Activated naive CD4-positive, alpha-beta T cell treated with anti-CD3 and anti-CD28 coated beads for 36 hours (primary cell): ENCODE measurements at regions of chr10 and their contacts with region 1.

Region 1: GRCh38 chr10:839550-840205 is 91.8 kb downstream of the LARP4B start:
- DNase-seq: no peak
- H3K4me3 Mint-ChIP-seq: no peak overlapping the region
- H3K27ac Mint-ChIP-seq: no peak overlapping the region
- H3K4me1 Mint-ChIP-seq: peaks cover 6% of the 10 kb centered on the region
- H3K27me3 Mint-ChIP-seq: no peaks in the 10 kb centered on the region

Region 2: GRCh38 chr10:1003884-1004675 is 164.4 kb after region 1 on chr10:
- CTCF ChIA-PET with region 1: no interaction called
- intact Hi-C with region 1: loop called (anchors 10 kb)
- DNase-seq: no peak
- H3K4me3 Mint-ChIP-seq: no peak overlapping the region
- H3K27ac Mint-ChIP-seq: no peak overlapping the region
- H3K4me1 Mint-ChIP-seq: peaks cover 14% of the 10 kb centered on the region
- H3K27me3 Mint-ChIP-seq: no peaks in the 10 kb centered on the region